Mammary epithelial cell (primary cell): ENCODE measurements at regions of chr15 and their contacts with region 1.

Region 1: DNA sequence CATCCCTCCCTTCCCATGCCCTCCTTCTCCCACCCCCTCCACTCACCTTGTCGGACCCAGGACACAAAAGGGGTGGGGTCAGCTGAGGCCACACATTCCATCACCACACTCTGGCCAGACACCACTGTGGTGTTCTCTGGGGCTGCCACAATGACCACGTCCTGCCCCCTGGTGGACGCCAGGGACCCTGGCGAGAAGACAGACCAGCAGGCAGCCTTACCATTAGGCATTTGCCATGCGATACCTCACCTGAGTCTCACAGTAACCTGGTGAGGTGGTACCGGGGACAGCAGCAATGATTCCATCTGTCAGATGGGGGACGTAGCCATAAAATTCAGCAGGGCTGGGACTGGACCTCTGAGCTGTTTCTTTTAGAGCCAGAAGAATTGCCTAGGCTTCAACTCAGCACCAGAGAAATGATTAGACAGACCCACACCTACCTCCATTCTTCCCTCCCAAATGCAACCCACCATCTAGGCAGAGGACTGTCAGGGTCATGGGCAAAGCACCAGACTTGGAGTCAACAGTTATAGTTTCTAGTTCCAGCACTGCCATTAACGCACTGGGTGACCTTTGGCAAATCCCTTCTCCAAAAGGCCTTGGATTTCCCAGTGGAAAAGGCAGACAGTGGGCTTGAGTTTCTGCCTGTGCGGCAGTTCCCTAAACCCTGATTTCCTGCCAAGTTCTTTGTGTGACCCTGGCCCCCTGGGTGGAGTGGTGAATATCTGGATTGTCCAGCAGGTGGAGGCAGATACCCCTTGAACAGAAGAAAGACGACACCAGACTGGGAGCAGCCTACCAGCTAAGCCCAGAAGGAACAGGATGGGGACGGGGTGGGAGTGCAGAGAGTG is 21.8 kb downstream of the IGDCC4 start:
- DNase-seq: peak; percentile 46
- H3K4me3 ChIP-seq: no peak overlapping the region
- H3K27ac ChIP-seq: no peak overlapping the region
- H3K4me1 ChIP-seq: no peaks in the 10 kb centered on the region
- H3K27me3 ChIP-seq: peaks cover 13% of the 10 kb centered on the region
- CTCF ChIP-seq: peak; percentile 91 to 95

Region 2: DNA sequence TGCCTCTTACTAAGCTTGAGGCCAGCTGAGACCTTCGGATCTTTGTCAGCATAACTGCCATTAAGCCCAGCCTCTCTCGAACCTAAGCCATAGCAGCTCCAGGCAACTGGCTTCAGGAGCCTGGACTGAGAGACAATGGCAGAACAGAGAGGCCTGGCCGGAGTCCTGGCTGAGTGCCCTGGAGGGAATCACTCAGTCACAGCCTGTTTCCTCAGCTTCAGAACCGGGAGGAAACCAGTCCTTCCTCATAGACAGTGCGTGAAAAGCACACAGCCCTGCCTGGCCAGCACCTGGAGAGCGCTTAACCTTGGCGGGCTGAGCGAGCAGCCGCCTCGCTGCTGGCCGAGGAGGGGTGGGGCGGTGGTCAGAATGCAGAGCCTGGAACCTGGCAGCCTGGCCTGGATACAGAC is 74.9 kb before region 1 on chr15:
- CTCF ChIA-PET with region 1: no interaction called
- dilution Hi-C with region 1: no loop called
- in situ Hi-C with region 1: no loop called
- intact Hi-C with region 1: no loop called
- DNase-seq: no peak
- H3K4me3 ChIP-seq: no peak overlapping the region
- H3K27ac ChIP-seq: no peak overlapping the region
- H3K4me1 ChIP-seq: no peaks in the 10 kb centered on the region
- H3K27me3 ChIP-seq: peaks cover 3% of the 10 kb centered on the region
- CTCF ChIP-seq: no peak

Region 3: GRCh38 chr15:65384895-65385858 is 15.8 kb before region 1 on chr15:
- CTCF ChIA-PET with region 1: no interaction called
- dilution Hi-C with region 1: no loop called
- in situ Hi-C with region 1: no loop called
- intact Hi-C with region 1: no loop called
- DNase-seq: peak; percentile 73
- H3K4me3 ChIP-seq: peak overlapping the region in 2 of 3 experiments; percentile 22 to 30
- H3K27ac ChIP-seq: no peak overlapping the region
- H3K4me1 ChIP-seq: peaks cover 11% of the 10 kb centered on the region
- H3K27me3 ChIP-seq: peaks cover 4% of the 10 kb centered on the region
- CTCF ChIP-seq: peak; percentile 83 to 93

Region 4: GRCh38 chr15:65434990-65435389 is 34.0 kb after region 1 on chr15:
- CTCF ChIA-PET with region 1: interaction called, 3 read pairs
- dilution Hi-C with region 1: no loop called
- in situ Hi-C with region 1: no loop called
- intact Hi-C with region 1: loop called (anchors 1 kb)
- DNase-seq: no peak
- H3K4me3 ChIP-seq: no peak overlapping the region
- H3K27ac ChIP-seq: no peak overlapping the region
- H3K4me1 ChIP-seq: peaks cover 7% of the 10 kb centered on the region
- H3K27me3 ChIP-seq: no peaks in the 10 kb centered on the region
- CTCF ChIP-seq: no peak